CD4-positive, alpha-beta T cell (primary cell): ENCODE measurements at regions of chr12 and their contacts with region 1.

Region 1: DNA sequence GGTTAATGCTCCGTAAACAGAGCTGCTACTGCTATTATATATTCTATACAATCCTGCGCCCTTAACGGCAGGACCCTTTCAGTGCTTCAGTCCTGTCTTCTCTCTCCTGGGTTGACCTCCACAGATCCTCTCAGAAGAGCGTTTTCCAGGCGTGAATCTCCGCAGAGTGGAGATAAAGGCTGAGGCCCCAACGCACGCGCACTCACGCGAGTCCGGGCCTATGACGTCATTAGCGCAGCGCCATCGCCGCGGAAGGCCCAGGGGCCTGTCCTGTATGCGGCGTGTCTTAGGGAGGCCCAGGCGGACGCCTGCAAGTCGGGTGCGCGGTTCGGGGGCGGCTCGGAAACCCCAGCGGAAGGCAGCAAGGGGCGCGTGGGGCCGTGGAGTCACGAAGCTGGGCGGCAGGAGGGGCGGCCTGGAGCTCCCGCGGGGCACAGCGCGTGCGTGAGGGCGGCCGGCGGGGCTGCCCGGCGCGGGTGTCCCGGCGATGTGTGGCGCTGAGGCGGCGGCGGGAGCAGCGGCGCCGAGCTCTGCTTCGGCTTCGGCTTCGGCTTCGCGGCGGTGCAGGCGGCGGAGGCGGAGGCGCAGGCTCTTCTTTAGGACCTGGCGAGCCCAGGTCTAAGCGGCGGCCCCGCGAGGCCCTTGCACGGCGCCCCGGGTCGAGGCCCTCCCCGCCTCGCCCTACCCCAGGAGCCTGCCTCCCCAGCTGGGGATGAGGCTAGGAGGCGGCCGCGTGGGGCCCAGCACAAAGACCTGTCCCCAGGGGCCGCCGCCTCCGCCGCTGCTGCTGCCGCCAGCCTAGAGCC is at the start of gene MAPKAPK5:
- DNase-seq: peak; percentile 93 to 99 (median 97)
- ATAC-seq: peak; percentile 83
- H3K4me3 ChIP-seq: peak within 1 kb of the TSS; percentile 100
- H3K4me3 Mint-ChIP-seq: peak within 1 kb of the TSS; percentile 99
- H3K27ac ChIP-seq: peak within 1 kb of the TSS; percentile 81 to 84
- H3K27ac Mint-ChIP-seq: peak within 1 kb of the TSS; percentile 98
- H3K4me1 ChIP-seq: peaks cover 43% of the 10 kb centered on the region
- H3K4me1 Mint-ChIP-seq: peaks cover 67% of the 10 kb centered on the region
- H3K27me3 ChIP-seq: no peaks in the 10 kb centered on the region
- H3K27me3 Mint-ChIP-seq: no peaks in the 10 kb centered on the region
- CTCF ChIP-seq: no peak
- total RNA-seq, gene MAPKAPK5: 62.2 to 63.6 TPM

Region 2: DNA sequence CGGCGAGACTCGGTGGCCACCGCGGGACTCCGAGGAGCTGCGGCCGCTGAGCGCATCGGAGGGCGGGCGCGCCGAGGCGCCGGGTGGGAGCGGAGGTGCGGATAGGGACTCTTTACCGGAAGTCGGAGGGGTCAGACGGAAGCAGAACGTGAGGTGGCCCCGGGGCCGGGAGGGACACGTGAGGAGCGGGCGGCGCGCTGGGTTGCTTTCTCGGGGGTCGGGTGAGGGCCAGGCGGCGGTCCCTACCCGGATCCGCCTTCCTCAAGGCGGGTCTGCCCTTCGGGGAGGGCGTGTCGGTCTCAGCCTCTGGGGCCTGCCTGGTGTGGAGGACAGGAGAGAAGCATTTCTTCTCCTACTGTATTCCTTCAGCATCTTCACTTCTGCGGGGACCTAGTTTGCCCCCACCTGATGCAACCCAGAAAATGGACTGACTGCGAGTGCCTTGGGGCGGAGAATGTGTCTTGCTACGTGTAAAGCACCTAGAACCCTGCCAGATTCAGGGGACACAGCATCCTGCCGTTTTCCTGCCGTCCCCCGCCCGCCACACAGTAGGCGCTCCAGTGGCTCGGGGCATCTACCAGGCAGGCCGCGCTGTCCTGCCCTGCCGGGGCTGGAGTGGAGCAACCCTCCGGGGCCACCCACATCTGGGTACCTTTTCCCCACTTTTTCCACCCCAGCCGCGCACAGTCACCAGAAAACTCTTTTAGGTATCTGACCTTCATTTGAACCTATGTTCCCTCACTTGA is 242.3 kb before region 1 on chr12:
- CTCF ChIA-PET with region 1: no interaction called
- POLR2A ChIA-PET with region 1: no interaction called
- intact Hi-C with region 1: loop called in 1 of 2 experiments (anchors 2 kb)
- DNase-seq: peak; percentile 70 to 92 (median 80)
- ATAC-seq: peak; percentile 69
- H3K4me3 ChIP-seq: peak overlapping the region; percentile 92
- H3K4me3 Mint-ChIP-seq: peak overlapping the region; percentile 94
- H3K27ac ChIP-seq: peak overlapping the region; percentile 83 to 88
- H3K27ac Mint-ChIP-seq: peak overlapping the region; percentile 88
- H3K4me1 ChIP-seq: peaks cover 19% of the 10 kb centered on the region
- H3K4me1 Mint-ChIP-seq: peaks cover 31% of the 10 kb centered on the region
- H3K27me3 ChIP-seq: no peaks in the 10 kb centered on the region
- H3K27me3 Mint-ChIP-seq: no peaks in the 10 kb centered on the region
- CTCF ChIP-seq: no peak

Region 3: DNA sequence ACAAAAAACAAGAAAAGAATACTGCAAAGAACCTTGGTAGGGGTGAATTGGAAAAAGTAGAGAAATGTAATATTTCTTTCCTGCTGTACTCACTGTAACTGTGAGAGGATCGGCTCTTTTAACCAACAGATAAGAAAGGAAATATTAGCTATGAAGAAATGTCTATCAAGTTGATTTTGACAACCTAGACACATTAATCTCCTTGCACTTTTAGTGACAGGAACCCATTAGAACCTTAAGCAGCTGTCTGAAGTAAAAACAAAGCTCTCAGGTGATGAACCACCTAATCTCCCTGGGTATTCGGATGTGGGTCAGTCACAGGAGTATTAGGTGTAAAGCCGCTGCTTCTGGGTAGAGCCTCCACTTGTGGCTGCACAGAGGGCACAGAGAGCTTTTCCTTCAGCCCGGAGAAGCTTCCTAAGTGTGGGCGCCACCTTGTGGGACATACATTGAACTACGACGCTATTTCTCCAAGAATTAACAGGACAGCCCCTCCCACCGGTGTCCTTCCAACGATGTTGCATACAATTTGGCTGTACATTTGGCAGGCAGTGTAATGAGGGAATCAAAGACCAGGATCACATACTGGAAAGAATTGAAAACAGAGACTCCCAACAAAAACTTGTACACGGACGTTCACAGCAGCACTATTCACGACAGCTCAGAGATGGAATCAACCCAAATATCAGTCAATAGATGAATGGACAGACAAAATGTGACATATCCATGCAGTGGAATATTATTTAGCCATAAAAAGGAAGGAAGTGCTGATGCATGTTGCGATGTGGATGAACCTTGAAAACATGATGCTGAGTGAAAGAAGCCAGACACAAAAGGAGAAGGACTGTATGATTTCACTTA is 28.8 kb before region 1 on chr12:
- CTCF ChIA-PET with region 1: interaction called, 3 read pairs
- POLR2A ChIA-PET with region 1: interaction called, 18 read pairs
- intact Hi-C with region 1: no loop called
- DNase-seq: peak; percentile 32 to 85 (median 48)
- ATAC-seq: peak; percentile 100
- H3K4me3 ChIP-seq: no peak overlapping the region
- H3K4me3 Mint-ChIP-seq: no peak overlapping the region
- H3K27ac ChIP-seq: no peak overlapping the region
- H3K27ac Mint-ChIP-seq: no peak overlapping the region
- H3K4me1 ChIP-seq: peaks cover 6% of the 10 kb centered on the region
- H3K4me1 Mint-ChIP-seq: peaks cover 6% of the 10 kb centered on the region
- H3K27me3 ChIP-seq: no peaks in the 10 kb centered on the region
- H3K27me3 Mint-ChIP-seq: no peaks in the 10 kb centered on the region
- CTCF ChIP-seq: peak; percentile 90

Region 4: DNA sequence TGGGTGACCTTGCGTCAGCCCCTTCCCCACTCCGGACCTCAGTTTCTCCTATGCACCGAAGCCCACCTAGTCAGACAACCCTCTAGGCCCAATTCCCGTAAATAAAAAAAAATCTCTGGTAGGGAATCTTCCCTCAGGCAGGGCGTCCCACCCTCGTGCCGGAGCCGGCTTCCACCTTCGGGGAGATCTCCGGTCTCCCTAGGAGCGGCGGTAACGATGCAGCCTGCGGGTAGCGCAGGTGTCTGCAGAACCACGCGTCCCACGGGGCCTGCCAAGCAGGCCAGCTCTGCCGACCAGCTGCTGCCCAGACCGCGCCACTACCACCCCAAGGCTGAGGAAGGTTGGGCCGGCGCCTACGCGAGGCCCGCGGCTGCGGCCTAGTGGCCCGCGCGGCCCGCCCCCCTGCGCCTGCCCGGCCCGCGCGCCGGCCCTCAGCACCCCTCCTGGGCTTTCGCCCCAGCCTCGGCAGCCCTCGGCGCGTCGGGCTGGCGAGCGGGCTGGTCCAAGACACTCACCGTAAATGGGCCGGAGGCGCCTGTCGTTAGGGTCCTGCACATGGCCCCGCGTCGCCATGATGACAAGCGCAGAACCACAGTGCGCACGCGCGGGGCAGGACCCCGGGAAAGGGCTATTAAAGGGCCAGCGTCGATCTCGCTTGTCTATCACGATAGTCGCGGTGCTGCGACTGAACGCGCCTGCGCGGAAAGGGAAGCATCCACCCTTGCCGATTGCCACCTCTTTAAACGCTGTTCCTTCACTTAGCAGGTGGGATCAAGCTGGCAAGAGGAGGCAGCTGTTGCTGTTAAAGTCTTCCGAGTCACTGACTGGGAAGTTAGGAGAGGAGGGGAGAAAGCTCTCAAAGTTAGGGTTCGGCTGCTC is 266.5 kb after region 1 on chr12 and contains the start of gene NAA25:
- CTCF ChIA-PET with region 1: no interaction called
- POLR2A ChIA-PET with region 1: interaction called, 8 read pairs
- intact Hi-C with region 1: loop called in 1 of 2 experiments (anchors 5 kb)
- DNase-seq: peak; percentile 76 to 93 (median 83)
- ATAC-seq: peak; percentile 82
- H3K4me3 ChIP-seq: peak within 1 kb of the TSS; percentile 95
- H3K4me3 Mint-ChIP-seq: peak within 1 kb of the TSS; percentile 95
- H3K27ac ChIP-seq: peak within 1 kb of the TSS; percentile 85 to 86
- H3K27ac Mint-ChIP-seq: peak within 1 kb of the TSS; percentile 94
- H3K4me1 ChIP-seq: peaks cover 28% of the 10 kb centered on the region
- H3K4me1 Mint-ChIP-seq: peaks cover 50% of the 10 kb centered on the region
- H3K27me3 ChIP-seq: no peaks in the 10 kb centered on the region
- H3K27me3 Mint-ChIP-seq: no peaks in the 10 kb centered on the region
- CTCF ChIP-seq: no peak
- total RNA-seq, gene NAA25: 31.1 to 34.6 TPM

Region 5: DNA sequence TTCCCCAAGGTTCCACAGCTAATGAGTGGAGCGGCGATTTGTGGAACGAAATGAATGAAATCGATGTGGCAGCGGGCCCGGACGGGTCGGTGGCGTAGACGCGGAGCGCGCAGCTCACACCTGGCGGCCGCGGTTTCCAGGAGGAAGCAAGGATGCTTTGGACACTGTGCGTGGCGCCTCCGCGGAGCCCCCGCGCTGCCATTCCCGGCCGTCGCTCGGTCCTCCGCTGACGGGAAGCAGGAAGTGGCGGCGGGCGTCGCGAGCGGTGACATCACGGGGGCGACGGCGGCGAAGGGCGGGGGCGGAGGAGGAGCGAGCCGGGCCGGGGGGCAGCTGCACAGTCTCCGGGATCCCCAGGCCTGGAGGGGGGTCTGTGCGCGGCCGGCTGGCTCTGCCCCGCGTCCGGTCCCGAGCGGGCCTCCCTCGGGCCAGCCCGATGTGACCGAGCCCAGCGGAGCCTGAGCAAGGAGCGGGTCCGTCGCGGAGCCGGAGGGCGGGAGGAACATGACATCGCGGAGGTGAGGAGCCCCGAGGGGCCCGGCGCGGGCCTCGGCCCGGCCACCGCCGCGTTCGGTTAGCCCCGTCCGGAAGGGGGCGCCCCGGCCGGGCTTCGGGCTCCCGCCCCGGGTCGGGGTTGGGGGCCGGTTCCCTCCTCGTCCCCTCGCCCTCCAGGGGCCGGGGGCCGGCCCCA is 576.8 kb after region 1 on chr12 and contains the start of gene PTPN11:
- CTCF ChIA-PET with region 1: no interaction called
- POLR2A ChIA-PET with region 1: interaction called, 4 read pairs
- intact Hi-C with region 1: loop called in 1 of 2 experiments (anchors 5 kb)
- DNase-seq: peak; percentile 77 to 95 (median 87)
- ATAC-seq: peak; percentile 84
- H3K4me3 ChIP-seq: peak within 1 kb of the TSS; percentile 79
- H3K4me3 Mint-ChIP-seq: peak within 1 kb of the TSS; percentile 97
- H3K27ac ChIP-seq: peak within 1 kb of the TSS; percentile 83 to 88
- H3K27ac Mint-ChIP-seq: peak within 1 kb of the TSS; percentile 99
- H3K4me1 ChIP-seq: peaks cover 36% of the 10 kb centered on the region
- H3K4me1 Mint-ChIP-seq: peaks cover 40% of the 10 kb centered on the region
- H3K27me3 ChIP-seq: no peaks in the 10 kb centered on the region
- H3K27me3 Mint-ChIP-seq: no peaks in the 10 kb centered on the region
- CTCF ChIP-seq: peak; percentile 10
- total RNA-seq, gene PTPN11: 44.6 to 46.4 TPM